Left lung (tissue), 14 donors: ENCODE measurements at regions of chr6 and their contacts with region 1.

Region 1: DNA sequence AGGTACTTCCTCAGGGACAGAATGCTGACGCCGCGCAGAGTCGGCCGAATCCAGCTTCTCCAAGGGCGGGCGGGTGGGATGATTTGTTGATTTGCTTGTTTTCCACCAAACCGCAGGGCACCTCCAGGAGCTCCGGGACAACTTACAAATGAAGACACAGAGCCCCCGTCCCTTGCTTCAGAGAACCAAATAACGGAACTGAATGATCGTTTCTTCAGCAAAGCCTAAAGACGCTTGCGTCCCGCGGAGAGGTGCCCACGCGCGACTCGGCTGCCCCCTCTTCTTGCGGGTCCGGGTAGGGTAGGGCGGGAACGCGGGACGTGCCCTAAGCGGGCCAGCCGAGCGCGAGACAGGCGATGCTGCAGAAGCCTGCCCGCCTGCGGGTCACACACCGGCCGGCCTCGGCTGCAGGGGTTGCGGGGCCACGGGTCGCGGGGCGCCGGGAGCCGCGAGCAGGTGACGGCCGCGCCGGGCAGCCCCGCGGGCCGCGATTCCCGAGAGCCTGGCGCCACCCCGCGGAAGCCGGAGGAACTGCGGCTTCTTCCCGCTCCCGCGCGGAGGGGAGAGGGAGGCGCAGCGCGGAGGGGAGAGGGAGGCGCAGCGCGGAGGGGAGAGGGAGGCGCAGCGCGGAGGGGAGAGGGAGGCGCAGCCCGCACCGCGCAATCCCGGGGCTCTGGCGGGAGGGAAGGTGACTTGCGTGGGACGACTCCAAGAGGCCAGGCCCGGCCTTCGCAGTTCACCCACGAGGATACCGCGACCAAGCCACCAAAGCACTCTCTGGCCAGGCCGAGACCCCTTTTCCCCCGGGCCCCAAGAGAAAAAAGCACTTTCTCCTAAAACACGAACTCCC is 7.7 kb upstream of the FOXF2 start:
- DNase-seq: peak in 3 of 4 donors; percentile 67 to 87 (median 84)
- ATAC-seq: peak; percentile 91
- H3K4me3 ChIP-seq: peak overlapping the region; percentile 19 to 25
- H3K27ac ChIP-seq: peak overlapping the region in 1 of 2 donors; percentile 56
- H3K4me1 ChIP-seq: peaks cover 2 to 48% of the 10 kb centered on the region in 2 donors
- H3K27me3 ChIP-seq: peaks cover 94 to 100% of the 10 kb centered on the region in 2 donors
- CTCF ChIP-seq: peak; percentile 88 to 95

Region 2: GRCh38 chr6:453152-453551 is 928.6 kb before region 1 on chr6:
- intact Hi-C with region 1: no loop called
- DNase-seq: peak in 2 of 4 donors; percentile 14 to 41
- ATAC-seq: no peak
- H3K4me3 ChIP-seq: no peak overlapping the region
- H3K27ac ChIP-seq: no peak overlapping the region
- H3K4me1 ChIP-seq: no peaks in the 10 kb centered on the region
- H3K27me3 ChIP-seq: no peaks in the 10 kb centered on the region
- CTCF ChIP-seq: no peak

Region 3: DNA sequence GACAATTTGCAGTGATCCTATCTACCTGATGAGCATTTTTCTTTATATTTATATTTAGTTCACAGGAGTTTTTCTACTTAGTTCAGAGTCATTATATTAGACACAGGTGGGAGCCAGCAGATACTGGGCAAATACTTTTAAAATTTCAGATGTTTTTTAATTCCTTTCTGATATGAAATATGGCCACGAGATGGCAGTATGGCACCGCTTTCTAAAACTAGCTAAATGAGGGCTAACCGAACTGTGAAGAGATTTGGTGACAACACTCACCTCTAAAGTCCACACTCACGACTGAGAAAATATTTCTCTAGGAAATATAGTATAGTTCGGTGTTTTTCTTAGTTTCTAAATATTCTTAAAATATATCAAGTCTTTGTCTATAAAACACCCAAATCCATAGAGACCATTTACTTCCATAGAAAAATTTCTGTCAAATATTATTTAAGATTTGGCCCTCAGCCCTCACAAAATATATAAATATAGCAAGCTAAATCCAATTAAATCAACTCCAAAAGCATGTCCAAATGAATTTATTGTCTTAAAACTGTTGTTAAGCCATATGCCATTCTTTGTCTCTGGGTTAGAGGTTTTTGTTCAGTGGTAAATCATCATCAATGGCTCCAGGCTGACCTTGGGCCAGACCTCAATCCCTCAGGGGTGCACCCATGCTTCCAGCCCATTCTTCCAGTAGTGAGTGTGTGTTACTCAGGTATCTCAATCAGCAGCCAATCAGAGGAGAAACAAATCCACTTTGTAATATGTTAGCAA is 788.4 kb before region 1 on chr6:
- intact Hi-C with region 1: loop called in 1 of 2 experiments (anchors 10 kb)
- DNase-seq: peak in 2 of 4 donors; percentile 54 to 74
- ATAC-seq: peak; percentile 89
- H3K4me3 ChIP-seq: no peak overlapping the region
- H3K27ac ChIP-seq: no peak overlapping the region
- H3K4me1 ChIP-seq: no peaks in the 10 kb centered on the region
- H3K27me3 ChIP-seq: no peaks in the 10 kb centered on the region
- CTCF ChIP-seq: peak; percentile 51 to 75

Region 4: DNA sequence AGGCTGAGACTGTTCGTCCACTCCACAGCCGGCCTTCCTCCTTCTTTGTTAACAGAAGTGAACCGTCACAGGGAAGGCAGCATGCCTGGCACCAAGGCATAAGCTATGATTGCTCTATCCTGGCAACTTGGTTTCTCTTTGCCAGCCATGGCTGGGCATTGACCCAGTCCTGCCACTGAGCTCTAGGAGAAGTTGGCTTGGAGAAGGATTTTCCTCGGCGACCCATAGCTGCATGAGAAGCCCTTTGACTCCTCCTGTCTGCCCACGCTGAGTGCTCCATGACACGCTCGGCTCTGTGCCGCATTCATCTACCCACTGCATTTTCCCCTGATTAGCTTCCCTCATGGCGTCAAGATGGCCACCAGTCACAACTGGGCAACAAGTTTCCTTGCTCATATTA is 576.9 kb before region 1 on chr6:
- intact Hi-C with region 1: loop called in 1 of 2 experiments (anchors 5 kb)
- DNase-seq: no peak
- ATAC-seq: no peak
- H3K4me3 ChIP-seq: no peak overlapping the region
- H3K27ac ChIP-seq: no peak overlapping the region
- H3K4me1 ChIP-seq: no peaks in the 10 kb centered on the region
- H3K27me3 ChIP-seq: peaks cover 0 to 4% of the 10 kb centered on the region in 2 donors
- CTCF ChIP-seq: no peak